K562 (cell line): ENCODE measurements at regions of chr7 and their contacts with region 1.

Region 1: GRCh38 chr7:140517546-140518369 is 38.5 kb upstream of the MKRN1 start:
- DNase-seq: peak; percentile 90 to 96 (median 95)
- ATAC-seq: peak; percentile 97
- H3K4me3 ChIP-seq: no peak overlapping the region
- H3K27ac ChIP-seq: no peak overlapping the region
- H3K4me1 ChIP-seq: peaks cover 4 to 17% of the 10 kb centered on the region in 2 experiments; a peak in 4 of 5 replicates
- H3K27me3 ChIP-seq: peaks cover 0 to 5% of the 10 kb centered on the region in 2 experiments; a peak in 1 of 5 replicates
- CTCF ChIP-seq: peak; percentile 96 to 99 (median 98)
- EP300 ChIP-seq: peak; percentile 28; the same call in 1 of the 2 replicates
- POLR2A ChIP-seq: no peak
- RAD21 ChIP-seq: peak; percentile 95 to 99

Region 2: DNA sequence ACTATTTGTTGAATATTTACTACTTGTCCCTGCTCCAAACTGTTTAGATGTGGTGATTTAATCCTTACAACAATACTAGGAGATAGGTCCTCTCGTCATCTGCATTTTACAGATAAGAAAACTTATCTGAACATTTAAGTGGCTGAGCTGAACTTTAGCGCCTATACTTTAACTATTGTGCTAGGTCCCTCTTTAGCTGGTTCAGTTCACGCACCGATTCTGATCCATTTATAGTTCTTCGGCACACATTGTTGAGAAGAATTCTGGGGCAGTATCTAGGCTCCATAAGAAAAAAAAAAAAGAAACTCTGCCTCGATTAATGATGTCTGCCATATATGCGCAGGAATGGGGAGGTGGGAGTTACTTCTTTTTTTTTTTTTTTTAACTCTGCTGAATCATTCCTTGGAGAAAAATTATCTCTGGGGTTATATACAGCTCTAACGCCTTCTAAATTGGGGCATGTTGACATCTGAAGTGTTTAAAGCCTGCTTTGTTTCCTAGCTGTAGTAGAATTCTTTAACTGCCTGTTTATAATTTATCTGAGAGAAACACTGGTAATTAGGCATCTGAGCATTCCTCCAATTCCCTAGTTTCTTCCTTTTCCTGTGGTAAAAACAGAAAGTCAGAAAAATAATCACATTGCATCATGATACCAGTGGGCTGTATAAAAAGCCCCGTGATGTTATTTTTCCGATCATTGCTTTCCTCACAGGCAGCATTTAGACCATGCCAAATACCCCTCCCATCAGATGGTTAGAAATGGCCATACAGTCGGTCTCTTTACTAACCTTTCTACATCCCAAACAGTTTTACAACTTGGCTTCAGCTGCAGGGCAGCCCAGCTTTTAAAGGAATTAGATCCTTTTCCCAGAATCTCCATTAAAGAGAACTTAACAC is 242.4 kb before region 1 on chr7:
- CTCF ChIA-PET with region 1: no interaction called
- POLR2A ChIA-PET with region 1: no interaction called
- in situ Hi-C with region 1: no loop called
- intact Hi-C with region 1: no loop called
- DNase-seq: peak; percentile 63 to 81 (median 68)
- ATAC-seq: peak; percentile 86
- H3K4me3 ChIP-seq: no peak overlapping the region
- H3K27ac ChIP-seq: peak overlapping the region; percentile 48; the same call in 1 of the 3 replicates
- H3K4me1 ChIP-seq: peaks cover 16 to 18% of the 10 kb centered on the region in 2 experiments
- H3K27me3 ChIP-seq: no peaks in the 10 kb centered on the region
- CTCF ChIP-seq: no peak
- EP300 ChIP-seq: peak; percentile 74
- POLR2A ChIP-seq: no peak
- RAD21 ChIP-seq: no peak; a peak in 1 of 4 replicates

Region 3: GRCh38 chr7:140506788-140507464 is 10.8 kb before region 1 on chr7:
- CTCF ChIA-PET with region 1: no interaction called
- POLR2A ChIA-PET with region 1: interaction called, 10 read pairs
- in situ Hi-C with region 1: no loop called
- intact Hi-C with region 1: no loop called
- DNase-seq: peak in 2 of 4 experiments; percentile 23 to 68
- ATAC-seq: peak; percentile 47
- H3K4me3 ChIP-seq: no peak overlapping the region
- H3K27ac ChIP-seq: peak overlapping the region; percentile 70
- H3K4me1 ChIP-seq: peaks cover 24 to 27% of the 10 kb centered on the region in 2 experiments; a peak in 4 of 5 replicates
- H3K27me3 ChIP-seq: no peaks in the 10 kb centered on the region
- CTCF ChIP-seq: peak in 1 of 3 experiments; percentile 37; a peak in 2 of 6 replicates
- EP300 ChIP-seq: no peak
- POLR2A ChIP-seq: no peak
- RAD21 ChIP-seq: no peak; a peak in 1 of 4 replicates

Region 4: DNA sequence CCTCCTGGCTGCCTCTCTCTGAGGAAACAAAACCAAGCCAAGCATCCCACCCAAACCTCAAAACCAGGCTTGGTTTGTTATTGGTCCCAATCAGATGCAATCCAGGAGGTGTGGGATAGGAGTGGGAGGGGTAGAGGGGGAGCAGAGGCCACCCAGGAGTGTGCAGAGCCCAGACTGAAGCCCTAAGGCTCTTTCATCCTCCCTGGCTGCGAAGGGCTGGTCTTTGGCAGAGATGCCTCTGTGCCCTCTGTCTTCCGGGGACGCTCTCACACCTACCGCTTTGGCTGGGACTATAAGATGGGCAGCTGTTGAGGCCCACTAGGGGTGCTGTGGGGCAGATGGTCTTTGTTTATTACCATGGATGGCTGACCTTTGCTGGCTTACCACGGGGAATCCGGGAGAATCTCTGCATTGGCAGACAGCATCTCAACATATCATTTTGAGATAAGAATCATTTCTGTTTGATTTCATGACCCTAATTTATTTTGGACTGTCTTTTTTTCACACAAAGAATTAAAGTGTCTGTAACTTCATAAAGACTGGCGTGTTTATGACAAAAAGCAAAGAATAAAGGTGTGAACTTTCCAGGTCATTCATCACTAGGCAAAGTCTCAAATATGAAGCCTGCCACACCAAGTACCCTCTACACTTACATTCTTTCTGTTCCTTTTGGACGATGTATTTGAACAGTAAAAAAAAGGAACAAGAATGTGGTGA is 129.3 kb after region 1 on chr7:
- CTCF ChIA-PET with region 1: interaction called, 4 read pairs
- POLR2A ChIA-PET with region 1: no interaction called
- in situ Hi-C with region 1: loop called (anchors 5 kb)
- intact Hi-C with region 1: no loop called
- DNase-seq: peak; percentile 65 to 78 (median 77)
- ATAC-seq: peak; percentile 91
- H3K4me3 ChIP-seq: no peak overlapping the region
- H3K27ac ChIP-seq: no peak overlapping the region
- H3K4me1 ChIP-seq: no peaks in the 10 kb centered on the region; a peak in 1 of 5 replicates
- H3K27me3 ChIP-seq: peaks cover 33 to 82% of the 10 kb centered on the region in 2 experiments
- CTCF ChIP-seq: peak; percentile 83 to 91 (median 86)
- EP300 ChIP-seq: no peak
- POLR2A ChIP-seq: no peak
- RAD21 ChIP-seq: peak in 1 of 2 experiments; percentile 38; a peak in 2 of 4 replicates

Region 5: GRCh38 chr7:140810830-140811556 is 293.2 kb after region 1 on chr7:
- CTCF ChIA-PET with region 1: no interaction called
- POLR2A ChIA-PET with region 1: no interaction called
- in situ Hi-C with region 1: no loop called
- intact Hi-C with region 1: loop called (anchors 10 kb)
- DNase-seq: peak; percentile 52 to 87 (median 68)
- ATAC-seq: peak; percentile 99
- H3K4me3 ChIP-seq: no peak overlapping the region
- H3K27ac ChIP-seq: no peak overlapping the region
- H3K4me1 ChIP-seq: no peaks in the 10 kb centered on the region
- H3K27me3 ChIP-seq: no peaks in the 10 kb centered on the region
- CTCF ChIP-seq: peak; percentile 78 to 93 (median 90)
- EP300 ChIP-seq: no peak; the same call in 1 of the 2 replicates
- POLR2A ChIP-seq: no peak
- RAD21 ChIP-seq: peak; percentile 84 to 92

Region 6: DNA sequence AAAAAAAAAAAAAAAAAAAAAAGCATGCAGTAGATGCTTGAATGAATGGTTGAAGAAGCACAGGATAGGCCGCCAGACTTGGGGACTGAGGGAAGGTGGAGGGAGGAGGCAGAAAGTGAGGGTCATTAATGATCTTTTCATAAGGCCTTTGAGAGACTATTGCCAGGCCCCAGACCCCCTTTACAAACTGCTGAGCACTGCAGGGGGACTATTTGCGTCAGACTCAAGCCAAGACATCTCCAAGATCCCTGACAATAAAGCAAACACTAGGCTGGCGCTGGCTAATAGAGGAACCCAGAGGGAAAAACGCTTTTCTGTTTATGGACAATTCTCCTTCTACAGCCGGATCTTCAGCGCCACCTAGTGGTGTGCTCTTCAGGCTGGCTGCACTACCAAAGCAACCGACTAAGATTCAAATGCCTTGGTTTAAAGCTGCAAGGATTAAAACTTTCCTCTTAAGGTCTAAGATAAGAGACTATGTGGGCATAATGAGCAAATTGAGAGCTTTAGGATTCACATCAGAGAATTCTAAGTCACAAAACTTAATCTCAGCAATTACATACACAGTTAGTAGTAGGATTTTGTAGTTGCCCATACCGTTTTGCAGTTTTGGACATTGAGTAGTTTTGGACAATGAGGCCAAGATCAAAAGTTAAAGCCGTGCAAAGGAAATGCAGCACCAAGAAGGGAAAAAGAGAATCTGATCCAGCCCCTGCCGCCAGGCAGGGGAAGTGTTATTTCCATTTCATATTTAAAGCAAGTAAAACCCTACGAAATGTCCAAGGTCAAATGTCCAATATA is 1015.6 kb after region 1 on chr7:
- CTCF ChIA-PET with region 1: no interaction called
- POLR2A ChIA-PET with region 1: no interaction called
- in situ Hi-C with region 1: no loop called
- intact Hi-C with region 1: loop called (anchors 5 kb)
- DNase-seq: peak; percentile 79 to 83 (median 81)
- ATAC-seq: peak; percentile 96
- H3K4me3 ChIP-seq: no peak overlapping the region
- H3K27ac ChIP-seq: no peak overlapping the region
- H3K4me1 ChIP-seq: no peaks in the 10 kb centered on the region
- H3K27me3 ChIP-seq: peaks cover 10% of the 10 kb centered on the region in 2 experiments
- CTCF ChIP-seq: peak; percentile 90 to 97 (median 97)
- EP300 ChIP-seq: no peak
- POLR2A ChIP-seq: no peak
- RAD21 ChIP-seq: peak; percentile 82 to 91